Common myeloid progenitor, CD34-positive (primary cell): ENCODE measurements at regions of chr1 and their contacts with region 1.

Region 1: GRCh38 chr1:51627678-51628077 is 10.8 kb downstream of the OSBPL9 start:
- DNase-seq: peak; percentile 61 to 78 (median 74)
- H3K4me3 ChIP-seq: no peak overlapping the region
- H3K27ac ChIP-seq: no peak overlapping the region
- H3K4me1 ChIP-seq: peaks cover 14 to 28% (median 22%) of the 10 kb centered on the region in 4 experiments
- H3K27me3 ChIP-seq: no peaks in the 10 kb centered on the region

Region 2: DNA sequence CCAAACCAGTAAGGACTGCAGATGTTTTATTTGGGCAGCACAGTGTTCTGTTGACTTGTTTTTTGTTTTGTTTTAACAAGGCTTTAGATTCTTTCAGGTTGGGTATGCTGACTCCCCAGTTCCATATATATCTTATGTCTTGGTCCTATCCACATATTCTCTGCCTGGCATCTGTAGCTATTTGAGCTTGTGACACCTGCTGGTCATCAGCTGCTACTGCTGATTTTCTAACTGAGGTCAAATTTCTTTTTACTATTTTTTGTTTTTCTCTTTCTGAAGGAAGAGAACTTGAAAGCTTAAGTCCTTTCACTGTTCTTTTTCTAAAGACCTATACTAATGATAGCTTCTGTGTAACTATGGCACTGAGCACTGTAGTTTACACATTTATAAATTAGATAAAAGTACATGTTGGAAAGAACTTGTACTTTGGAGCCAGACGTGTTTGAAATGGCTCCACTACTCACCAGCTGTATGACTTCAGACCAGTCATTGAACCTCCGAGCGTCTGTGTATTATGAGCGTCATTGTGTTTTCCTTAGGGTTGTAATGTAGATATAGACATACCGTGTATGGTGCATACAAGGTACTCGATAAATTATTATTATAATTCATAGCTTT is 141.4 kb after region 1 on chr1:
- CTCF ChIA-PET with region 1: interaction called, 32 read pairs
- POLR2A ChIA-PET with region 1: interaction called, 3 read pairs
- DNase-seq: peak; percentile 63 to 78 (median 74)
- H3K4me3 ChIP-seq: no peak overlapping the region
- H3K27ac ChIP-seq: no peak overlapping the region
- H3K4me1 ChIP-seq: no peaks in the 10 kb centered on the region
- H3K27me3 ChIP-seq: no peaks in the 10 kb centered on the region